ENCODE measurements at regions of chr4 and their contacts with region 1.

Region 1: DNA sequence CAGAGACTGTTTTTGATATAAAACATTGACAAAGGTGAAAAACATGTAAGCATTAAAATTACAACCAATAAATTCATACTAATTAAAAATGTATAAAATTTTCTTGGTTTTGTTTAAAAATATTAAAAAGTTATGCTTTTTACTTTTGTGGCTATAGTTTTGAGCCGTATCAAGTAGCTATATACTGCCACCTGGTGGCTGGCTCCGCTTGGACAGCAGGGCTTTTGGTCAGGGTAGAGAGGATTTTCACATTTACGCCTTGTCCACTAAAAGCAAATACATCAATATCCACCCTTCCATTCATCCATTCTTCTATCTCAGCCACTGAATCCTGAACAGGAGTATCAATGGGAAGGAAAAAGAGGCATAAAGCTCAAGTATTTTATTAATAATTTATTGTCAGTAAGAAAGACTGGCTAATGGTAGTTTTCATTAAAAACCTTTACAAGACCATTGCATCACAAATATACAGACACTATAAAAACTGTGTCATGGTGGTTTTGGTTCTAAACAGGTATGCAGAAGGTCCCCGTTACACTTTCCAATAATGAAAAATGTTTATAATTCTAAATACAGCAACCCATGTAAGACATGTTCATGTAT is 32.1 kb upstream of the MTNR1A start:
- DNase-seq: peak; percentile 20
- ATAC-seq: no peak
- H3K4me3 Mint-ChIP-seq: no peak overlapping the region
- H3K27ac Mint-ChIP-seq: no peak overlapping the region
- H3K4me1 Mint-ChIP-seq: no peaks in the 10 kb centered on the region
- H3K27me3 Mint-ChIP-seq: no peaks in the 10 kb centered on the region
- CTCF ChIP-seq: peak; percentile 67

Region 2: DNA sequence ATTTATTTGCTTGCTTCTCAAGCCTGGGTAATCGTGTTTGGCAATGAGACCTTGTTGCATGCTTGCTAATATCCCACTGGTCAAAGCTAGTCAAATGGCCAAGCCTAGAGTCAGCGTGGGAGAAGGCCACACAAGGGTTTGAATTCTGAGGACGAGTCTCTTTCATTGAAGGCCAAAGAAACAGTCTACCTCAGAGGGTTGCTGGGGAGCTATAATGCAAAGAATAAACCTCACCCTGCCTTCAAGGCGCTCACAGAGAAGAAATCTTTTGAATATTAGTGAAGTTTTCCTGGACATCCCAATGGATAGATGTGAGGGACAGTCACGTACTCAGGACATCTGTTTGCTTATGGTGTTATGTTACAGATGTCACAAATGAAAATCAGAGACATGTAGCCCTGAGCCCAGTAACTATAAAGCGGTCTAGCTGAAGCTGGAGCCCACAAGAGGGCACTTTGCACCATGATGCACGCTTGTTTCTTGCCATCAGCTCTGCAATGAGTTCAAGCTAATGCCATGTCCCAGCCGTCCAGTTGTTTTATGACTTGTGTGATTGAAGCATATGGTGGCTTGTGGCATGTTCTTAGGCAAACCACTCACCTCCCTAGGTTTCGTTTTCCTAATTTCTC is 519.6 kb before region 1 on chr4:
- CTCF ChIA-PET with region 1: interaction called, 8 read pairs
- POLR2A ChIA-PET with region 1: no interaction called
- intact Hi-C with region 1: loop called (anchors 1 kb)
- DNase-seq: no peak
- ATAC-seq: no peak
- H3K4me3 Mint-ChIP-seq: no peak overlapping the region
- H3K27ac Mint-ChIP-seq: no peak overlapping the region
- H3K4me1 Mint-ChIP-seq: peaks cover 7% of the 10 kb centered on the region
- H3K27me3 Mint-ChIP-seq: peaks cover 39% of the 10 kb centered on the region
- CTCF ChIP-seq: no peak

Region 3: GRCh38 chr4:186149872-186150271 is 437.6 kb before region 1 on chr4:
- CTCF ChIA-PET with region 1: no interaction called
- POLR2A ChIA-PET with region 1: no interaction called
- intact Hi-C with region 1: loop called (anchors 10 kb)
- DNase-seq: no peak
- ATAC-seq: no peak
- H3K4me3 Mint-ChIP-seq: no peak overlapping the region
- H3K27ac Mint-ChIP-seq: no peak overlapping the region
- H3K4me1 Mint-ChIP-seq: peaks cover 6% of the 10 kb centered on the region
- H3K27me3 Mint-ChIP-seq: peaks cover 39% of the 10 kb centered on the region
- CTCF ChIP-seq: no peak

Region 4: GRCh38 chr4:186204103-186204559 is 383.4 kb before region 1 on chr4:
- CTCF ChIA-PET with region 1: no interaction called
- POLR2A ChIA-PET with region 1: no interaction called
- intact Hi-C with region 1: no loop called
- DNase-seq: peak; percentile 54
- ATAC-seq: peak; percentile 65
- H3K4me3 Mint-ChIP-seq: peak overlapping the region; percentile 69
- H3K27ac Mint-ChIP-seq: peak overlapping the region; percentile 66
- H3K4me1 Mint-ChIP-seq: peaks cover 23% of the 10 kb centered on the region
- H3K27me3 Mint-ChIP-seq: no peaks in the 10 kb centered on the region
- CTCF ChIP-seq: no peak

Region 5: GRCh38 chr4:186570193-186570996 is 17.1 kb before region 1 on chr4:
- CTCF ChIA-PET with region 1: no interaction called
- POLR2A ChIA-PET with region 1: no interaction called
- intact Hi-C with region 1: no loop called
- DNase-seq: no peak
- ATAC-seq: no peak
- H3K4me3 Mint-ChIP-seq: no peak overlapping the region
- H3K27ac Mint-ChIP-seq: no peak overlapping the region
- H3K4me1 Mint-ChIP-seq: no peaks in the 10 kb centered on the region
- H3K27me3 Mint-ChIP-seq: no peaks in the 10 kb centered on the region
- CTCF ChIP-seq: no peak

Region 6: GRCh38 chr4:186820391-186820891 is 232.9 kb after region 1 on chr4:
- CTCF ChIA-PET with region 1: no interaction called
- POLR2A ChIA-PET with region 1: no interaction called
- intact Hi-C with region 1: no loop called
- DNase-seq: no peak
- ATAC-seq: no peak
- H3K4me3 Mint-ChIP-seq: no peak overlapping the region
- H3K27ac Mint-ChIP-seq: no peak overlapping the region
- H3K4me1 Mint-ChIP-seq: no peaks in the 10 kb centered on the region
- H3K27me3 Mint-ChIP-seq: no peaks in the 10 kb centered on the region
- CTCF ChIP-seq: no peak